ENCODE measurements at regions of chr12 and their contacts with region 1.

Region 1: GRCh38 chr12:121060149-121061001 is 21.3 kb upstream of the OASL start:
- DNase-seq: peak; percentile 78
- H3K4me3 ChIP-seq: peak overlapping the region in 2 of 3 experiments; percentile 6 to 19
- H3K27ac ChIP-seq: peak overlapping the region; percentile 35
- H3K4me1 ChIP-seq: peaks cover 4% of the 10 kb centered on the region
- H3K27me3 ChIP-seq: peaks cover 0 to 2% of the 10 kb centered on the region in 2 experiments
- CTCF ChIP-seq: peak; percentile 32 to 47
- POLR2A ChIP-seq: no peak

Region 2: GRCh38 chr12:120950807-120951206 is 109.6 kb before region 1 on chr12:
- CTCF ChIA-PET with region 1: no interaction called
- POLR2A ChIA-PET with region 1: no interaction called
- dilution Hi-C with region 1: no loop called
- intact Hi-C with region 1: no loop called
- DNase-seq: no peak
- H3K4me3 ChIP-seq: no peak overlapping the region
- H3K27ac ChIP-seq: no peak overlapping the region
- H3K4me1 ChIP-seq: no peaks in the 10 kb centered on the region
- H3K27me3 ChIP-seq: no peaks in the 10 kb centered on the region
- CTCF ChIP-seq: no peak
- POLR2A ChIP-seq: no peak

Region 3: DNA sequence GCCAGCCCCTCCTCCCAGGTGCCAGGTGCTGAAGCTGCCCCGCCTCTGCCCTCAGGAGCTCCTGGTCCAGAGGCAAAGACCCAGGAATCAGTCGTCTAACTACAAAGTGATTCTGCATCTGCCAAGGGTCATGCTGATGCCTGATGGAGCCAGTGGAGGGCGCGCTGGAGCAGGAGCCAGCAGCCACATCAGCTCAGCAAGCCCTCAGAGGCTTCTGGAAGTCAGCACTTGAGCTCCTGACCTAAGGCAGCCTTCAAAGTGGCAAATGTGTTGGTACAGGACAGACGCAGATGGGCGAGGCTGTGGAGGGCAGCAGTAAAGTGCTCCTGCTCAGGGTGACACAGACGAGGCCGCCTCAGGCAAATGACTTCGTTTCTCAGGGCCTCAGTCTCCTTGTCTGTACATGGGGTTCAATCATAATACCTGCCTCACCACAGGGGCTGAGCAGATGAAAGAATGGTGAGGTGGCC is 55.0 kb before region 1 on chr12:
- CTCF ChIA-PET with region 1: interaction called, 19 read pairs
- POLR2A ChIA-PET with region 1: interaction called, 4 read pairs
- dilution Hi-C with region 1: no loop called
- intact Hi-C with region 1: no loop called
- DNase-seq: peak; percentile 61
- H3K4me3 ChIP-seq: no peak overlapping the region
- H3K27ac ChIP-seq: no peak overlapping the region
- H3K4me1 ChIP-seq: no peaks in the 10 kb centered on the region
- H3K27me3 ChIP-seq: no peaks in the 10 kb centered on the region
- CTCF ChIP-seq: peak; percentile 78 to 89
- POLR2A ChIP-seq: no peak

Region 4: DNA sequence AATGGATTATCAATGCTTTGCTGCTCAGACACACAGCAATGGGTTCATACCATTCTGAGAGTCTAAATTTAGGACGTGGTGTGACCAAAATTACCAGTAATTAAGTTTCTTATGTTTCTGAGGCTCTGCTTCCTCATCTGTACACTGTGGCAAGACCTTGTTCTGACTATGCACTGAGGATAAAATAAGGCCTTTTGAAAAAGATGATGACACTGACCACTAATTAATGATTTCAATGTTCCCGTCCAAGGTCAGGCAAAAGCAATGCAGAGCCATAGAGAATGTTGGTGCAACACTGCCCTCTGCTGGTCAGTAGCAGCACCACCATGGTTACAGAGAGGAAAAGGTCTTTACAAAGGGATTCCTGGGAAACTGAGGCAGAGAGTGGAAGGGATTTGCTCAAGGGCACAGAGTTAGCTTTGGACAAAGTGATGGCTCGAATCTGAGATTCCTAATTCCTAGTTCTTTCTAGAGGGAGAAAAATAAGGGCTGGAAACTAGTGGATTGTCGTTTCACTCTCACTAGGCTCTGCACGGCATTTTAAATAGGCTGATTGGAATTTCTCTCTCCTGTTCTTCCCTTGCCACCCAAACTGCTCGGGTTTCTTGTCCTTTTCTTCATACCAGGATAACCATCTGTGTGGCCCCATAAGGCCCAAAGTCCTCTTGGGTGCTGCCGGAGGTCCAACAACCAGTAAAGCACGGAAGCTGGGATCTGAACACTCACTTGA is 50.0 kb after region 1 on chr12:
- CTCF ChIA-PET with region 1: interaction called, 45 read pairs
- POLR2A ChIA-PET with region 1: no interaction called
- dilution Hi-C with region 1: no loop called
- intact Hi-C with region 1: loop called (anchors 1 kb)
- DNase-seq: peak; percentile 63
- H3K4me3 ChIP-seq: no peak overlapping the region
- H3K27ac ChIP-seq: no peak overlapping the region
- H3K4me1 ChIP-seq: no peaks in the 10 kb centered on the region
- H3K27me3 ChIP-seq: no peaks in the 10 kb centered on the region
- CTCF ChIP-seq: peak; percentile 80 to 92
- POLR2A ChIP-seq: no peak

Region 5: GRCh38 chr12:121223292-121224285 is 163.2 kb after region 1 on chr12:
- CTCF ChIA-PET with region 1: interaction called, 16 read pairs
- POLR2A ChIA-PET with region 1: interaction called, 3 read pairs
- dilution Hi-C with region 1: no loop called
- intact Hi-C with region 1: no loop called
- DNase-seq: no peak
- H3K4me3 ChIP-seq: no peak overlapping the region
- H3K27ac ChIP-seq: no peak overlapping the region
- H3K4me1 ChIP-seq: no peaks in the 10 kb centered on the region
- H3K27me3 ChIP-seq: no peaks in the 10 kb centered on the region
- CTCF ChIP-seq: no peak
- POLR2A ChIP-seq: no peak

Region 6: DNA sequence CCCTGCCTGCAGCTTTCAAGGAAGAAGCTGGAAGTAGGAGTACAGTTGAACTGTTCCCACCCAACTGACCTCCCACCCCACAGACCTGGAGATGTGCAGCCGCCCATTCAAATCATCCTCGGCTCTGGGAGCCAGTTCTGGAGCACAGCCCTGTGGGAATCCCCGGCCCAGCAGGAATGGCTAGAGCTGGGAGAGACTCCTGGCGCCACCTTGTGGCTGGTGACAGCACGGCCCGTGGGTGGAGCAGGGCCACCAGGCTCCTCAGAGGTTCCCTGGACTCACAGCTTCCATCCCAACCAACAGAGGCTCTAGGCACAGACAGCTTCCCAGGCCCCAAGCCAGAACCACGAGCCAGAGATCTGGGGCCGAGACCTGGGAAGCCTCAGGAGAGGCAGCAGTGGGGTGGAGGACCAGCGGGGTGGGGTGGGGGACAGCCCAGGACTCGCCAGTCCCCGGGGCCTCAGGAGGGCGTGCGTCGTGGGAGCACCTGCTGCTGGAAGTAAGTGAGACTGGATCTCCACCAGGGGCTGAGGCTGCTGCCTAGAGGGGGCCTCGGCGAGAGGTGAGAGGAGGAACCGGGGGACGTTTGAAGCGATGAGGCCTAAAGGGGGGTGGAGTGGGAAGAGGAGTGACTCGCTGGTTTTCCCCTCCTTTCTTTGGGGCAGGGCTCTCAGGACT is 383.0 kb after region 1 on chr12:
- CTCF ChIA-PET with region 1: interaction called, 23 read pairs
- POLR2A ChIA-PET with region 1: no interaction called
- dilution Hi-C with region 1: no loop called
- intact Hi-C with region 1: loop called (anchors 1 kb)
- DNase-seq: peak; percentile 65
- H3K4me3 ChIP-seq: no peak overlapping the region
- H3K27ac ChIP-seq: no peak overlapping the region
- H3K4me1 ChIP-seq: no peaks in the 10 kb centered on the region
- H3K27me3 ChIP-seq: no peaks in the 10 kb centered on the region
- CTCF ChIP-seq: peak; percentile 91 to 98
- POLR2A ChIP-seq: no peak